ENCODE measurements at regions of chr1 and their contacts with region 1.

Region 1: DNA sequence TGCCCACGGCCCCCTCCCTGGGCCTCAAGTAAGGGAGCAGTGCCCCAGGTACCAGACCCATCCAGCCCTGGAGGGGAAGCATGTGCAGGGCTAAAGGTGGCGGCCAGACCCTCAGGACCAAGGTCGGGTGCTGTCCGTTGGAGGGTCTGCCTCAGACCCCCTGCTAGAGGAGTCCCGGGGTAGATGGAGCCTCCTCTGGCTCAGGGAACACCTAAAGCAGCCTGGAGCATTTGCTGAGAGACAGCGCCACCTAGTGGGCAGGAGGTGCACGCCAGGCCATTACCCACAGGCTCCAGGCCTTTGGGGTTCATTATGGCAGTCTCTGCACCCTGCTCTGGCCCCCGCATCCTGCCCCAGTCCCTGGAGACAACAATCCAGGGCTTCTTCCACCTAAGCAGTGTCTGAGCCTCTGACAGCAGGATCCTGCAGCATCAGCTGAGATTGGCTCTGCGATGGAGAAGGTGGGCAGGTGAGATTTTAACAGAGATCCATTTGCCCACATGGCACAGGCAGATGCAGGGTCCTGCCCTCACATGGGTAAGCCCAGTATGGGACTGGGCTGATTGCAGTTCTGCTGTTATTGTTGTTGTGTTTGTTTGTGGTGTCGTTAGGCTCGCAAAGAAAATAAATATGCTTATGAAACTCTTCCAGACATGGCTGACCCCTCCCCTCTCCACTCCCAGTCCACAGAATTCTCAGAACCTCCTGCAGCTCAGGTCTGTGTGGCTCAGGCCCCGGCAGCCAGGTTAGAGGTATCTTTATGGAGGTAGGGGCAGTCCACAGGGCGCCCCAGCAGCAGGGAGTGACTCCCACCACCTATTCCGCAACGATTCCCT is 42.4 kb downstream of the CTNNBIP1 start:
- DNase-seq: peak; percentile 67 to 97 (median 89)

Region 2: GRCh38 chr1:9629445-9630201 is 238.0 kb before region 1 on chr1:
- intact Hi-C with region 1: loop called (anchors 1 kb)
- DNase-seq: peak in 2 of 10 donors; percentile 23 to 27

Region 3: GRCh38 chr1:9724706-9725476 is 142.7 kb before region 1 on chr1:
- intact Hi-C with region 1: loop called (anchors 5 kb)
- DNase-seq: peak in 8 of 10 donors; percentile 33 to 90 (median 58)

Region 4: GRCh38 chr1:9784508-9785133 is 83.0 kb before region 1 on chr1:
- intact Hi-C with region 1: loop called (anchors 1 kb)
- DNase-seq: peak in 3 of 10 donors; percentile 28 to 66 (median 54)

Region 5: DNA sequence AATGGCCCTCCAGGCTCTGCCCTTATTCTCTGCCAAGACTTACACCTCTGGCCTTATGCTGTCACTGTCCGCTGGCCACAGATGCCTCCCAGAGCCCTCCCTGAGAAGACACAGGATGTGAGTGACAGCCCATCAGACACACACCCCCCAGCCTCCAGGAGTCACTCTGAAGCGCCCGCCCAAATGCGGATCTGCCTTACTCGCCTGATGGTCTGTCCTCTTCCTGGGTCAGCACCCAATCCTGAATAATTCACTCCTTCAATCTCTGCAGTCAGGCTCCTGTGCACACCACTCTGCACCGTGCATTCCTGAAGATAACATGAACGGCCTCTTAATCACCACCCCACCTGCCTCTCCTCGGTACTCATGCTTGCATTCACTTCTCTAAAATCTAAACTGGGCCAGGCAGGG is 58.5 kb before region 1 on chr1:
- intact Hi-C with region 1: no loop called
- DNase-seq: peak in 1 of 10 donors; percentile 57

Measured in posterior cingulate gyrus (tissue), 11 donors.